Panc1 (cell line): ENCODE measurements at regions of chr16 and their contacts with region 1.

Region 1: DNA sequence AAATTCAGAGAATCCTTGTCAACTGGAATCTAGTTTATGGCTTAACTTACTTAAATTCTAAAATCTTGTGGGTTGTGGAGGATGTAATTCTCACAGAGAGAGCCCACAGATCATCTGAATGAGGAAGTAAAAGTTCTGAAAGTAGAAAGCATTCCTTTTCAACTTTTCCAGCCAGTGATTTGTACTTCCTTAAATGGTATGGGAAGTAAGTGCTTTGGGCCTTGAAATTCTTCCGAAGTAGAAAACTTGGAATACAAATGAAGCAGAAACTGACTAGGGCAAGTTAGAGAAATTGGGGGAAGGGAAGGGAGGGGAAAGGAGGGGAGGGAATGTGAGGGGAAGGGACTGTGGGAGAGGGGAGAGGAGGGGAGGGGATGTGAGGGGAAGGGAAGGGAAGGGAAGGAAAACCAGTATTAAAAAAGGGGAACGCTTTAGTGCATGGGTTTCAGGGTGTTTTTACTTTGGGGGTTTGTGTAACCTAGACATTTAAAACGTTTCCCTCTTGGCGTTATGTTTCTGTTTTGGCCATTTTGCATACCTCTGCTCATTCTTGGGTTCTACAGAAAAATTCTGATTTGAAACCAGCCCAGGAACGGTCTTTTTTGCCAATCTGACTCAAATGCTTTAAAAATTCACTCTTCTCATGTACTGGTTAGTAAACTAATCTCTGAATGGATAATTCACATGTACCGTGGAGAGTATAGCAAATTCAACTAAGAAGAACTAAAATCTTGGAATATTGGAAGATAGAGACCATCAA is 15.5 kb upstream of the SNTB2 start:
- DNase-seq: no peak
- ATAC-seq: no peak
- H3K4me3 ChIP-seq: no peak overlapping the region
- H3K27ac ChIP-seq: no peak overlapping the region
- H3K4me1 ChIP-seq: peaks cover 8% of the 10 kb centered on the region; the same call in 1 of the 2 replicates
- H3K27me3 ChIP-seq: no peaks in the 10 kb centered on the region
- CTCF ChIP-seq: no peak

Region 2: GRCh38 chr16:69186642-69187445 is 15.3 kb after region 1 on chr16 and contains the start of gene SNTB2:
- CTCF ChIA-PET with region 1: no interaction called
- POLR2A ChIA-PET with region 1: interaction called, 14 read pairs
- in situ Hi-C with region 1: no loop called
- intact Hi-C with region 1: no loop called
- DNase-seq: no peak
- ATAC-seq: peak; percentile 97
- H3K4me3 ChIP-seq: peak within 1 kb of the TSS; percentile 71 to 77
- H3K27ac ChIP-seq: peak within 1 kb of the TSS; percentile 84
- H3K4me1 ChIP-seq: peaks cover 33% of the 10 kb centered on the region
- H3K27me3 ChIP-seq: no peaks in the 10 kb centered on the region
- CTCF ChIP-seq: no peak
- total RNA-seq, gene SNTB2: 40.8 TPM